Heart left ventricle (tissue), 16 donors: ENCODE measurements at regions of chr7 and their contacts with region 1.

Region 1: DNA sequence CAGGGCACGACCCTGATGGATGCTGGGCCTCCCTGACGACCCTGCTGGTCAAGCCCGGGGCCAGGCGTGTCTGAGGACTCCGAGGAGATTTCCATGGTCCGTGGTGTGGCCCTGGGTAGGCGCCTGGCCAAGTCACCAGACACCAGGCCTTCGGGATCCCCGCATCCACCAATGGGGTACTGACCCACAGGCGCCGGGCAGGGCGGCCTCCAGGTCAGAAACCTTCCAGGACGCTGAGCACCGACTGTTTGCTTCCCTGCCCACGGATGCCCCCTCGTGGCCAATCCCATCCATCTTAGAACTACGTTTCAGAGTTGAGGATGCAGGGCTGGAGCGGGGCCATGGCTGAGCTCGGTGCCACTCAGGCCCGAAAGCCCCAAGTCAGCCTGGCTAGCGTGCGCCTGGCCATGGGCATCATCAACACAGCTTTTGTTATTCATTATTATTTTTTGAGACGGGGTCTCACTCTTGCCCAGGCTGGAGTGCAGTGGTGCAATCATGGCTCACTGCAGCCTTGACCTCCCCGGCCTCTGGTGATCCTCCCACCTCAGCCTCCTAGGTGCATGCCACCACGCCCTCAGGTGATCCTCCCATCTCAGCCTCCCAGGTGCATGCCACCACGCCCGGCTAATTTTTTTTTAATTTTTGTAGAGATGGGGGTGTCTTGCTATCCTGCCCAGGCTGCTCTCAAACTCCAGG is 7.1 kb upstream of the AMZ1 start:
- DNase-seq: peak; percentile 80 to 90 (median 82)
- ATAC-seq: peak; percentile 72 to 87 (median 80)
- H3K4me3 ChIP-seq: no peak overlapping the region
- H3K27ac ChIP-seq: no peak overlapping the region
- H3K4me1 ChIP-seq: peaks cover 0 to 11% (median 0%) of the 10 kb centered on the region in 12 donors
- H3K27me3 ChIP-seq: peaks cover 0 to 20% (median 3%) of the 10 kb centered on the region in 9 donors
- CTCF ChIP-seq: peak; percentile 68 to 86 (median 78)
- POLR2A ChIP-seq: no peak

Region 2: DNA sequence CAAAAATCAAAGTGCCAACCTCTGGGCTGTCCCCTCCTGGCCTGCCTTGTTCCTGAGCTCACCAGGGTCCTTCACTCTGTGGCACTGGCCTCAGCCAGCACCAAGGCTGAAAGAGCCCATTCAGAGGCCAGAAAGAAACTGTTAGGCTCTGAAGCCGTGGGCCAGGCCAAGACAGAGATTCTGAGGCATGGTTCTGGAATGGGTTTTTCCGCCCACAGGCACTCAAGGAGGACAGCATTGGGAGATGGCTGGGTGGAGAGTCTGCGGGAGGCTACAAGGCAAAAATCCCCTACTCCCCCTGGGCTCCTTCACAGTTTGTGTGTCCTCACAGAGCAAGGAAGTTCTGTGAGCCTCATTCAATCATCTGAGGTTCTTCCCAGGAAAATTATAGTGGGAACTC is 236.5 kb before region 1 on chr7:
- intact Hi-C with region 1: loop called in 1 of 10 experiments (anchors 10 kb)
- DNase-seq: peak in 1 of 5 donors; percentile 35
- ATAC-seq: peak in 3 of 4 donors; percentile 61 to 74 (median 66)
- H3K4me3 ChIP-seq: no peak overlapping the region
- H3K27ac ChIP-seq: peak overlapping the region in 6 of 12 donors; percentile 1 to 62 (median 38)
- H3K4me1 ChIP-seq: peaks cover 0 to 9% (median 0%) of the 10 kb centered on the region in 12 donors
- H3K27me3 ChIP-seq: no peaks in the 10 kb centered on the region
- CTCF ChIP-seq: no peak
- POLR2A ChIP-seq: no peak

Region 3: GRCh38 chr7:2451171-2452073 is 229.5 kb before region 1 on chr7:
- intact Hi-C with region 1: loop called in 8 of 10 experiments (anchors 1 to 10 kb)
- DNase-seq: peak; percentile 84 to 94 (median 86)
- ATAC-seq: peak; percentile 92 to 97 (median 96)
- H3K4me3 ChIP-seq: peak overlapping the region in 11 of 12 donors; percentile 14 to 63 (median 47)
- H3K27ac ChIP-seq: peak overlapping the region in 5 of 12 donors; percentile 3 to 33 (median 13)
- H3K4me1 ChIP-seq: peaks cover 0 to 15% (median 11%) of the 10 kb centered on the region in 12 donors
- H3K27me3 ChIP-seq: no peaks in the 10 kb centered on the region
- CTCF ChIP-seq: peak; percentile 82 to 95 (median 90)
- POLR2A ChIP-seq: no peak

Region 4: GRCh38 chr7:2477447-2478398 is 203.2 kb before region 1 on chr7:
- intact Hi-C with region 1: loop called in 3 of 10 experiments (anchors 1 to 10 kb)
- DNase-seq: peak; percentile 66 to 89 (median 72)
- ATAC-seq: peak; percentile 81 to 88 (median 84)
- H3K4me3 ChIP-seq: peak overlapping the region in 1 of 12 donors; percentile 12
- H3K27ac ChIP-seq: peak overlapping the region in 4 of 12 donors; percentile 12 to 47 (median 26)
- H3K4me1 ChIP-seq: peaks cover 4 to 37% (median 29%) of the 10 kb centered on the region in 12 donors
- H3K27me3 ChIP-seq: peaks cover 0 to 29% (median 0%) of the 10 kb centered on the region in 9 donors
- CTCF ChIP-seq: peak; percentile 66 to 83 (median 74)
- POLR2A ChIP-seq: no peak

Region 5: DNA sequence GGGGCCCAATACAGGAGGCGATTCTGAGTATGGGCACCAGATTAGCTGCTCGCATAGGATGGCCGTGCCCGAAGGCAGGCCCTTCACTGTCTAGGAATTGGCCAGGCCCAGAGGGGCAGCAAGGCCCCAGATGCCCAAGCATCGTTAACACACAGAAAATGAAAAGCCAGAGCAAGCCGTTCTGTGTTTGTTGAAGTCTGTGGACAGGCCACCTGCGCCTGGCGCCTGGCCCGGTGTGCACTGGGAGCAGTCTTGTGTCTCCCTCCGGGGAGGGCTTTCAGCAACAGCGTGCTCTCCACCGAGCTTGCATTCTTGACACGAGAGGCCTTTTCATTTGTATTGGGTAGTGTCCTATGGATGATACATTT is 83.7 kb before region 1 on chr7:
- intact Hi-C with region 1: no loop called
- DNase-seq: no peak
- ATAC-seq: no peak
- H3K4me3 ChIP-seq: no peak overlapping the region
- H3K27ac ChIP-seq: no peak overlapping the region
- H3K4me1 ChIP-seq: peaks cover 0 to 8% (median 0%) of the 10 kb centered on the region in 12 donors
- H3K27me3 ChIP-seq: no peaks in the 10 kb centered on the region
- CTCF ChIP-seq: no peak
- POLR2A ChIP-seq: no peak

Region 6: DNA sequence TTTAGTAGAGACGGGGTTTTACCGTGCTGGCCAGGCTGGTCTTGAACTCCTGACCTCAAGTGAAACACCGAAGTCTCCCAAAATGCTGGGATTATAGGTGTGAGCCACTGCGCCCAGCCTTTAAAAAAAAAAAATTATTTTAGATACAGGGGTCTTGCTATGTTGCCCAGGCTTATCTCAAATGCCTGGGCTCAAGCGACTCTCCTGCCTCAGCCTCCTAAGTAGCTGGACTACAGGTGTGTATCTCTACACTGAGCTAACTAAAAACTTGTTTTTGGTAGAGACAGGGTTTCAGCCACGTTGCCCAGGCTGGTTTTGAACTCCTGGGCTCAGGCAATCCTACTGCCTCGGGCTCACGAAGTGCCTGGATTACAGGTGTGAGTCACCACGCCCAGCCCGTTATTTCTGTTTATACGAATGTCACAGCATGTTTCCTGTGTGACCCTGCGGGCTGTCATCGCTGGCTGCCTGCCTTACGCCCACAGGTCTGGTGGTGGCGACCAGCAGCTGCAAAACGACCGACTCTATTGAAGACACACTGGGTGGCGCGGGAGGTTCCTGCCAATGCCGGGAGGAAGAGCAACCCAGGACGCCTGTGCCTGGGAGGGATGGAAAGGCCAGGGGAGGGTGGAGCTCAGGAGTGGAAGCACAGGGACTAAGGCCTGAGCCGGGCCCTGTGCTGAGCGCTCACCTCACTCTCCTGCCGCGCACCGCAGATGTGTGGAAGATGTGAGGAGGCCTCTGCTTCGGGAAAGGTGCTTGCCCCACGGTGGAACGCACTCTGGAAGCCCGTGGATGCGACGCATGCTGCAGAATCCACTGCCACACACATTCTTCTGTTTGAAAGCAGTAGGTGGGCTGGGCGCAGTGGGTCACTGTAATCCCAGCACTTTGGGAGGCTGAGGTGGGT is 39.9 kb after region 1 on chr7:
- intact Hi-C with region 1: no loop called
- DNase-seq: peak in 2 of 5 donors; percentile 48 to 76
- ATAC-seq: peak in 1 of 4 donors; percentile 21
- H3K4me3 ChIP-seq: no peak overlapping the region
- H3K27ac ChIP-seq: no peak overlapping the region
- H3K4me1 ChIP-seq: peaks cover 0 to 30% (median 19%) of the 10 kb centered on the region in 12 donors
- H3K27me3 ChIP-seq: no peaks in the 10 kb centered on the region
- CTCF ChIP-seq: no peak
- POLR2A ChIP-seq: no peak

Region 7: GRCh38 chr7:2737771-2738540 is 57.0 kb after region 1 on chr7:
- intact Hi-C with region 1: no loop called
- DNase-seq: peak in 4 of 5 donors; percentile 67 to 72 (median 69)
- ATAC-seq: peak in 3 of 4 donors; percentile 13 to 64 (median 37)
- H3K4me3 ChIP-seq: peak overlapping the region in 3 of 12 donors; percentile 1 to 31 (median 12)
- H3K27ac ChIP-seq: peak overlapping the region in 9 of 12 donors; percentile 4 to 59 (median 32)
- H3K4me1 ChIP-seq: peaks cover 6 to 68% (median 45%) of the 10 kb centered on the region in 12 donors
- H3K27me3 ChIP-seq: no peaks in the 10 kb centered on the region
- CTCF ChIP-seq: no peak
- POLR2A ChIP-seq: no peak